ENCODE measurements at regions of chr16 and their contacts with region 1.

Region 1: GRCh38 chr16:68760671-68761275 is 23.7 kb downstream of the CDH1 start:
- DNase-seq: peak; percentile 95
- ATAC-seq: peak; percentile 73
- H3K4me3 ChIP-seq: peak overlapping the region; percentile 44
- H3K27ac ChIP-seq: peak overlapping the region; percentile 69
- H3K4me1 ChIP-seq: peaks cover 69% of the 10 kb centered on the region
- H3K27me3 ChIP-seq: no peaks in the 10 kb centered on the region
- CTCF ChIP-seq: no peak
- EP300 ChIP-seq: peak; percentile 58 to 84; a peak in 3 of 4 replicates
- POLR2A ChIP-seq: peak; percentile 69
- RAD21 ChIP-seq: 0 out of 2 replicates have a peak, but pooled peaks have one; percentile 10

Region 2: GRCh38 chr16:68704232-68704867 is 56.4 kb before region 1 on chr16:
- CTCF ChIA-PET with region 1: interaction called, 5 read pairs
- POLR2A ChIA-PET with region 1: no interaction called
- RAD21 ChIA-PET with region 1: interaction called, 6 read pairs
- SMC1A ChIA-PET with region 1: interaction called, 6 read pairs
- in situ Hi-C with region 1: no loop called
- intact Hi-C with region 1: loop called (anchors 1 kb)
- DNase-seq: no peak
- ATAC-seq: peak; percentile 93
- H3K4me3 ChIP-seq: no peak overlapping the region
- H3K27ac ChIP-seq: no peak overlapping the region
- H3K4me1 ChIP-seq: peaks cover 3% of the 10 kb centered on the region; the same call in 1 of the 2 replicates
- H3K27me3 ChIP-seq: no peaks in the 10 kb centered on the region
- CTCF ChIP-seq: peak; percentile 82 to 89 (median 87)
- EP300 ChIP-seq: no peak
- POLR2A ChIP-seq: no peak
- RAD21 ChIP-seq: peak; percentile 98

Region 3: GRCh38 chr16:68719993-68720489 is 40.7 kb before region 1 on chr16:
- CTCF ChIA-PET with region 1: interaction called, 10 read pairs
- POLR2A ChIA-PET with region 1: interaction called, 18 read pairs
- RAD21 ChIA-PET with region 1: interaction called, 39 read pairs
- SMC1A ChIA-PET with region 1: interaction called, 29 read pairs
- in situ Hi-C with region 1: no loop called
- intact Hi-C with region 1: loop called (anchors 1 kb)
- DNase-seq: peak; percentile 89
- ATAC-seq: peak; percentile 95
- H3K4me3 ChIP-seq: no peak overlapping the region
- H3K27ac ChIP-seq: peak overlapping the region; percentile 56
- H3K4me1 ChIP-seq: peaks cover 16% of the 10 kb centered on the region
- H3K27me3 ChIP-seq: no peaks in the 10 kb centered on the region
- CTCF ChIP-seq: no peak
- EP300 ChIP-seq: peak; percentile 71 to 77; a peak in 3 of 4 replicates
- POLR2A ChIP-seq: no peak
- RAD21 ChIP-seq: no peak

Region 4: GRCh38 chr16:68744369-68745280 is 16.1 kb before region 1 on chr16:
- CTCF ChIA-PET with region 1: interaction called, 6 read pairs
- POLR2A ChIA-PET with region 1: interaction called, 17 read pairs
- RAD21 ChIA-PET with region 1: interaction called, 19 read pairs
- SMC1A ChIA-PET with region 1: interaction called, 26 read pairs
- in situ Hi-C with region 1: no loop called
- intact Hi-C with region 1: loop called (anchors 1 kb)
- DNase-seq: no peak
- ATAC-seq: no peak
- H3K4me3 ChIP-seq: no peak overlapping the region
- H3K27ac ChIP-seq: no peak overlapping the region
- H3K4me1 ChIP-seq: peaks cover 20% of the 10 kb centered on the region
- H3K27me3 ChIP-seq: no peaks in the 10 kb centered on the region
- CTCF ChIP-seq: no peak
- EP300 ChIP-seq: no peak
- POLR2A ChIP-seq: no peak
- RAD21 ChIP-seq: no peak

Region 5: DNA sequence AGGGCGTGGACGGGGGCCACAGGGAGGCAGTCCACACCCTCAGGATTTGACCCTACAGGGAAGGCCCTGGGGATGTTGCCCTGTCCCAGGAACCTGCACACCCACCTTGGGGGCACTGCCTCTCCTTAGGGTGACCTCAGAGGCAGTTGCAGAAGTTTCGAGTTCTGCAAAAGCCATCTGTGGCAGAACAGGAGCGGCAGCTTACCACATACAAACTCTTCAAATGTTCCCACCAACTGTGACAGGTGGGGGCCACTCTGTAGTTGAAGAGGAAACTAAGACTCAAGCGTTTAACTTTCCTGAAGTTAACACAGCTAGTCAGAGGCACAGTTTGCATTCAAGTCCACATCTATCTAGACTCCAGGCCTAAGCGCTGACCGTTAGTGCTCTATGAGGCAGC is 21.4 kb after region 1 on chr16:
- CTCF ChIA-PET with region 1: interaction called, 27 read pairs
- POLR2A ChIA-PET with region 1: interaction called, 13 read pairs
- RAD21 ChIA-PET with region 1: interaction called, 25 read pairs
- SMC1A ChIA-PET with region 1: interaction called, 33 read pairs
- in situ Hi-C with region 1: no loop called
- intact Hi-C with region 1: loop called (anchors 1 kb)
- DNase-seq: no peak
- ATAC-seq: peak; percentile 80
- H3K4me3 ChIP-seq: peak overlapping the region; percentile 26
- H3K27ac ChIP-seq: peak overlapping the region; percentile 84
- H3K4me1 ChIP-seq: peaks cover 36% of the 10 kb centered on the region
- H3K27me3 ChIP-seq: no peaks in the 10 kb centered on the region
- CTCF ChIP-seq: no peak
- EP300 ChIP-seq: no peak
- POLR2A ChIP-seq: no peak
- RAD21 ChIP-seq: no peak

Region 6: DNA sequence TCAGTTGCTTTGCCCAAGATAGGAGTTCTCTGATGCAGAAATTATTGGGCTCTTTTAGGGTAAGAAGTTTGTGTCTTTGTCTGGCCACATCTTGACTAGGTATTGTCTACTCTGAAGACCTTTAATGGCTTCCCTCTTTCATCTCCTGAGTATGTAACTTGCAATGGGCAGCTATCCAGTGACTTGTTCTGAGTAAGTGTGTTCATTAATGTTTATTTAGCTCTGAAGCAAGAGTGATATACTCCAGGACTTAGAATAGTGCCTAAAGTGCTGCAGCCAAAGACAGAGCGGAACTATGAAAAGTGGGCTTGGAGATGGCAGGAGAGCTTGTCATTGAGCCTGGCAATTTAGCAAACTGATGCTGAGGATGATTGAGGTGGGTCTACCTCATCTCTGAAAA is 73.8 kb after region 1 on chr16:
- CTCF ChIA-PET with region 1: no interaction called
- POLR2A ChIA-PET with region 1: no interaction called
- RAD21 ChIA-PET with region 1: no interaction called
- SMC1A ChIA-PET with region 1: no interaction called
- in situ Hi-C with region 1: no loop called
- intact Hi-C with region 1: no loop called
- DNase-seq: no peak
- ATAC-seq: no peak
- H3K4me3 ChIP-seq: no peak overlapping the region
- H3K27ac ChIP-seq: no peak overlapping the region
- H3K4me1 ChIP-seq: no peaks in the 10 kb centered on the region
- H3K27me3 ChIP-seq: no peaks in the 10 kb centered on the region
- CTCF ChIP-seq: no peak
- EP300 ChIP-seq: no peak
- POLR2A ChIP-seq: no peak
- RAD21 ChIP-seq: no peak

Region 7: DNA sequence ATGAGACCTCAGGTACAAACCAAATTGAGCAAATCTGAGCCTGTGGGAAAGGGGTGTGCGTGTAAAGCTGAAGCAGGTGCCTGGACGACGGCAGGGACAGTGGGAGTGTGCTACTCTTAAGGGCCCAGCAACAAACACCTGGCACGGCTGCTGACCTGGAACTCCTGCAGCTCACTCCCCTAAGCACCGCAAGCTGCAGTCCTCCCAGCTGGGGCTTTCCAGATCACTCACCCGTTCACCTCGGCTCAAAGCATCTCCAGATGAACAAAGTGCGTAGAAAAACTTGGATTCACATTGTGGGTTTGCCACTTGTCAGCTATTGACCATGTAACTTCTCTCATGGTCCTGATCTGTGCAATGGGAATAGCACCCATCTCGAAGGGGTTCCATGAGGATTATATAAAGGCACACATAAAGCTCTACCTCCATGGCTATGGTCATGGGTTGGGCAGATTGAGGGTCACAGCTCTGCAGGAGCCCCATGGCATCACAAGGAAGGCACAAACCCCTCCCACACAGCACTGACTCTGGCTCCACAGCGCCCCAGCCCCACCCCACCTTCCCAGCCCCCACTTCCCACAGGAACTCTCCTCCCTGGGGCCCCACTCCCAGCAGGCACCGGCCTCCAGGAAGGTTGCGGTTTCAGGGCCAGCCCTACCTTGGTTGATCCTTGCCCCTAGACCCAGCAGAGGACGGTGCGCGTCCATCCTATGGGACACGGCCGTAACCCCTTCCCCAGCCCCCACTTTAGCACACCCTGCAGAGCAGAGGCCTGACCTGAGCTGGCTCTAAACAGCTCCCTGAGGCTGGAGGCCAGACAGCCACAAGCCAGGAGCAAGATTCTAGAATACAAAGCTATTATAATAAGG is 1656.2 kb after region 1 on chr16:
- CTCF ChIA-PET with region 1: no interaction called
- POLR2A ChIA-PET with region 1: no interaction called
- RAD21 ChIA-PET with region 1: no interaction called
- SMC1A ChIA-PET with region 1: no interaction called
- in situ Hi-C with region 1: loop called (anchors 25 kb)
- intact Hi-C with region 1: no loop called
- DNase-seq: no peak
- ATAC-seq: peak; percentile 95
- H3K4me3 ChIP-seq: no peak overlapping the region
- H3K27ac ChIP-seq: peak overlapping the region; percentile 87
- H3K4me1 ChIP-seq: peaks cover 50% of the 10 kb centered on the region
- H3K27me3 ChIP-seq: no peaks in the 10 kb centered on the region
- CTCF ChIP-seq: no peak
- EP300 ChIP-seq: peak; percentile 60 to 69; a peak in 2 of 4 replicates
- POLR2A ChIP-seq: 0 out of 2 replicates have a peak, but pooled peaks have one; percentile 20
- RAD21 ChIP-seq: no peak

Measured in GM12878 (cell line).